ENCODE measurements at regions of chr19 and their contacts with region 1.

Region 1: DNA sequence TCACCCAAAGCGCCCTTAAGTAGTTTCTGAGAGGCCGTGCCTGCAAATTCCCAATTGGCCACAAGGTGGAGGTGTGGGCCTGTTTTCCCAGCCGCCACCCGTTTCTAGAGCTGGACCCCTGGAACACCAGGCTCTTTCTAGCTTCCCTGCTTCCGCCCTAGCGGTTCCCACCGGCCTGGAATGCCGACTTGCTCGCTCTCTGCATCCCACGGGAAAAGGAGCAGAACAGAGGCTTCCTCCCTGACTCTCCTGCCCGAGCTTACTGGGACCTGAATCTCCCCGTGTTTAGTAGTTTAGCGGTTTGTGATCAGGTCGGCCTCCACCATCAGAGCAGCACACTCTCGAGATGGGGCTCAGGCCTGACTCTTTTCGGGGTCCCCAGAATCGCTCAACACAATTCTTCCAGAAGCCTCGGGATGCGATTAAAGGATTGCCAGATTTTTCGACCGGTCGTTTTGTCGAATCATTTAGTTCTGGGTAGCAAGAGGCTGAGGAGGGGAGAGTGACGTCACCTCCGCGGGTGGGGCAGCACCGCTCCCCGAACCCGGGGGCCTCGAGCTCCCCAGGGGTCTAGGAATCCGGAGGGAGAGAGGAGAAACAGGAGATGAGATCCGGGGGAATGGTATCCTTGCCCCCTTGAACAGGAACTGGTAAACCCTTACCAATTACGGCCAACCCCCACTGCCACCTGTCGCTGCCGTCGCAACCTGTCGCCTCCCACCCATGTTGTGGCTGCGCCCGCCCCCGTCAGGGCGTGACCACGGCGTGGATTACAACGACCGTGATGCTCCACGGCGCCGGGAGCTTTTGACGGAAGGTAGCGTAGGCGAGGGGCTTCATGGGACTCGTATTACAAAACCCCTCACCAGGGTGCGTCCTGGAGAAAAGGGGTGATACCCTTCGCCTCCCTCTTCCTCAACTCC is 8.0 kb downstream of the NAPSA start:
- DNase-seq: peak; percentile 72 to 77
- H3K4me3 ChIP-seq: peak overlapping the region; percentile 28 to 75 (median 59)
- H3K27ac ChIP-seq: peak overlapping the region; percentile 90 to 92
- H3K4me1 ChIP-seq: no peaks in the 10 kb centered on the region
- H3K27me3 ChIP-seq: no peaks in the 10 kb centered on the region
- CTCF ChIP-seq: peak; percentile 84 to 95 (median 85)
- POLR2A ChIP-seq: no peak

Region 2: GRCh38 chr19:50458396-50459066 is 101.1 kb after region 1 on chr19:
- intact Hi-C with region 1: loop called (anchors 10 kb)
- DNase-seq: no peak
- H3K4me3 ChIP-seq: no peak overlapping the region
- H3K27ac ChIP-seq: no peak overlapping the region
- H3K4me1 ChIP-seq: no peaks in the 10 kb centered on the region
- H3K27me3 ChIP-seq: peaks cover 3 to 38% of the 10 kb centered on the region in 2 donors
- CTCF ChIP-seq: no peak
- POLR2A ChIP-seq: no peak